H1 (cell line): ENCODE measurements at regions of chr17 and their contacts with region 1.

Region 1: GRCh38 chr17:41966463-41967140 is at the start of gene CNP:
- DNase-seq: peak in 1 of 2 experiments; percentile 90
- H3K4me3 ChIP-seq: peak within 1 kb of the TSS; percentile 71 to 96 (median 78)
- H3K27ac ChIP-seq: peak within 1 kb of the TSS; percentile 65
- H3K4me1 ChIP-seq: peaks cover 0 to 10% (median 5%) of the 10 kb centered on the region in 4 experiments; a peak in 6 of 7 replicates
- H3K27me3 ChIP-seq: no peaks in the 10 kb centered on the region
- CTCF ChIP-seq: no peak
- EP300 ChIP-seq: 0 out of 3 replicates have a peak, but pooled peaks of 1 of the 2 experiments have one; percentile 7
- POLR2A ChIP-seq: peak; percentile 49 to 53; a peak in 2 of 3 replicates
- RAD21 ChIP-seq: no peak
- total RNA-seq, gene CNP: 60.6 and 64.2 TPM in 2 replicates

Region 2: GRCh38 chr17:41930009-41930832 is 36.4 kb before region 1 on chr17 and contains the start of gene ODAD4:
- CTCF ChIA-PET with region 1: interaction called, 5 read pairs
- POLR2A ChIA-PET with region 1: interaction called, 17 read pairs
- DNase-seq: peak; percentile 77 to 92
- H3K4me3 ChIP-seq: peak within 1 kb of the TSS; percentile 71 to 81 (median 75)
- H3K27ac ChIP-seq: peak within 1 kb of the TSS; percentile 28
- H3K4me1 ChIP-seq: peaks cover 0 to 4% (median 2%) of the 10 kb centered on the region in 4 experiments; a peak in 2 of 7 replicates
- H3K27me3 ChIP-seq: no peaks in the 10 kb centered on the region
- CTCF ChIP-seq: peak in 2 of 3 experiments; percentile 30 to 47; a peak in 3 of 4 replicates
- EP300 ChIP-seq: no peak
- POLR2A ChIP-seq: peak in 1 of 2 experiments; percentile 84; a peak in 2 of 3 replicates
- RAD21 ChIP-seq: peak; percentile 36 to 46
- total RNA-seq, gene ODAD4: 1.3 TPM in 2 replicates

Region 3: GRCh38 chr17:41982026-41982760 is 15.6 kb after region 1 on chr17:
- CTCF ChIA-PET with region 1: interaction called, 60 read pairs
- POLR2A ChIA-PET with region 1: interaction called, 32 read pairs
- DNase-seq: no peak
- H3K4me3 ChIP-seq: no peak overlapping the region
- H3K27ac ChIP-seq: no peak overlapping the region
- H3K4me1 ChIP-seq: no peaks in the 10 kb centered on the region
- H3K27me3 ChIP-seq: no peaks in the 10 kb centered on the region; a peak in 1 of 7 replicates
- CTCF ChIP-seq: no peak
- EP300 ChIP-seq: no peak
- POLR2A ChIP-seq: no peak
- RAD21 ChIP-seq: no peak

Region 4: GRCh38 chr17:42005166-42005565 is 38.6 kb after region 1 on chr17:
- CTCF ChIA-PET with region 1: interaction called, 3 read pairs
- POLR2A ChIA-PET with region 1: interaction called, 14 read pairs
- DNase-seq: no peak
- H3K4me3 ChIP-seq: no peak overlapping the region
- H3K27ac ChIP-seq: no peak overlapping the region
- H3K4me1 ChIP-seq: no peaks in the 10 kb centered on the region
- H3K27me3 ChIP-seq: no peaks in the 10 kb centered on the region
- CTCF ChIP-seq: no peak
- EP300 ChIP-seq: no peak
- POLR2A ChIP-seq: no peak
- RAD21 ChIP-seq: no peak

Region 5: DNA sequence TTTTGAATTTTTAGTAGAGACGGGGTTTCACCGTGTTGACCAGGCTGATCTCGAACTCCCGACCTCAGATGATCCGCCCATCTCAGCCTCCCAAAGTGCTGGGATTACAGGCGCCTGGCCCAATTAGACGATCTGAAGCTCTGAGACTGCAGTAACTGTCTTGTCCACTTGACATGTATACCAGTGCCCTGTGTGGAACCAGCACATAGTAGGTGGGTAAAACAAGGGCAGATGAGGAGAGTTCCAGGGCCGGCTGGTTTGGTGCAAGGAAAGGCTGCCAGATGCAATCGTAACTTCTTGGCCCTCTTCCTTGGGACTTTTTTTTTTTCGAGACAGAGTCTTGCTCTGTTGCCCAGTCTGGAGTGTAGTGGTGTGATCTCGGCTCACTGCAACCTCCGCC is 80.7 kb after region 1 on chr17:
- CTCF ChIA-PET with region 1: no interaction called
- POLR2A ChIA-PET with region 1: no interaction called
- DNase-seq: no peak
- H3K4me3 ChIP-seq: no peak overlapping the region
- H3K27ac ChIP-seq: no peak overlapping the region
- H3K4me1 ChIP-seq: peaks cover 0 to 8% (median 2%) of the 10 kb centered on the region in 4 experiments; a peak in 5 of 7 replicates
- H3K27me3 ChIP-seq: peaks cover 0 to 4% (median 1%) of the 10 kb centered on the region in 4 experiments; a peak in 3 of 7 replicates
- CTCF ChIP-seq: no peak
- EP300 ChIP-seq: no peak
- POLR2A ChIP-seq: no peak
- RAD21 ChIP-seq: no peak

Region 6: DNA sequence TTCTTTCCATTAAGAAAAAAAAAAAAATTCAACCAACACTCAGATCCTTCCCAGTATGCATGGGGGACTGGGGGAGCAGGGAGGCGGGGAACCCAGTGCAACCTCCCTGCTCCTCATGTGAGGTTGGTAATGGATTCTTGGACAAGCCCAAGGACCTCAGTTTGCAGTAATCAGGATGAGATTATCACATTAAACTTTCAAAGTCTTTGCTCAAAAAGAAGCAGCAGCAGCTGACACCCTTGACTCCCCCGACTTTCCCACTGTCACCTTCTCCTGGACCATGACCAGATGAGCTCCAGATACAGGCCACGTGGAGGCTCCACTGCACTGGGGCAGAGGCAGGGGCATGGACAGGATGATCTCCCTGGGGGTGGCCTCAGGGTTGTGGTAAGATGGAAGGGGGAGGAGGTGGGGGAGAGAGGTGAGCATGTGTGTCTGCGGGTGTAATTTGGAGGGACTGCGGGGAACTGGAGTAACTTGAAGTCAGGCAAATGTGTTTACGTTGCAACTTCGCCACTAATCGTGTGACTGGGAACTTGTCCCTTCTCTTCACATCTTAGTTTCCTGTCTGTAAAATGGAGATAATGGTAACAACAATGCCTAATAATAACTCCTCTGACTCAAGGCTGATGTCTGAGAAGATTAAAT is 111.9 kb after region 1 on chr17:
- CTCF ChIA-PET with region 1: no interaction called
- POLR2A ChIA-PET with region 1: no interaction called
- DNase-seq: no peak
- H3K4me3 ChIP-seq: no peak overlapping the region
- H3K27ac ChIP-seq: no peak overlapping the region
- H3K4me1 ChIP-seq: peaks cover 0 to 4% (median 3%) of the 10 kb centered on the region in 4 experiments; a peak in 3 of 7 replicates
- H3K27me3 ChIP-seq: no peaks in the 10 kb centered on the region
- CTCF ChIP-seq: no peak
- EP300 ChIP-seq: no peak
- POLR2A ChIP-seq: no peak
- RAD21 ChIP-seq: no peak